ENCODE measurements at regions of chr3 and their contacts with region 1.

Region 1: DNA sequence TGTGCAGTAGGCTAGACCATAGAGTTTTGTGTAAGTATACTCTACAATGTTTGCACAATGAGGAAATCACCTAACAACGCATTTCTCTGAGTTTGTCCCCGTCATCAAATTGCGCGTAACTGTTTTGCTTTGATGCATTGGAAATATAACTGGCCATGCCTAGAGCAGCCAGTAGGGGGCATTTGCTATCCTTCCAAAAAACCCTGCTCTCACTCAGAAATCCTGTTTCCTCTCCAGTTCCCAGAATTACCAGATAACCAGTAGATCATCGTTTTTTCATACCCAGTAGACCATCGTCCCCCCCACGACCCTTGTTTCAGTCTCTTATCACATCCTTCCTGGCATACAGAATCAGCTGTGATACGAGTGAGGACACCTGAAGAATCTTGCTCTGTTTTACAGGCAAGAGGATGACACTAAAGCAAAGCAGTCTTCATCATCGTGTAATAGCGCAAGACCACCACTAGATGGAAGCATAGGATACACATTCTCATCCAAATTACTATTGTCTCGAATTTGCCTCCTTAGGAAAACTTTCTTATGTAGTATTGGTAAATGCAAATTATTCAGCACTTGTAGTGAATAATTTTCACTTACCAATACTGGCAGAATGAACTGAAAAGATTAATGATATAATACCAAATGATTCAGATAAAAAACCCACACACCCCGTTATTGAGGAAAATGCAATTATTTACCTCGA is 4.4 kb upstream of the GABRR3 start:
- DNase-seq: peak; percentile 36
- ATAC-seq: peak; percentile 99
- H3K4me3 Mint-ChIP-seq: peak overlapping the region; percentile 80
- H3K27ac Mint-ChIP-seq: peak overlapping the region; percentile 41
- H3K4me1 Mint-ChIP-seq: peaks cover 5% of the 10 kb centered on the region
- H3K27me3 Mint-ChIP-seq: peaks cover 5% of the 10 kb centered on the region
- CTCF ChIP-seq: peak; percentile 60

Region 2: DNA sequence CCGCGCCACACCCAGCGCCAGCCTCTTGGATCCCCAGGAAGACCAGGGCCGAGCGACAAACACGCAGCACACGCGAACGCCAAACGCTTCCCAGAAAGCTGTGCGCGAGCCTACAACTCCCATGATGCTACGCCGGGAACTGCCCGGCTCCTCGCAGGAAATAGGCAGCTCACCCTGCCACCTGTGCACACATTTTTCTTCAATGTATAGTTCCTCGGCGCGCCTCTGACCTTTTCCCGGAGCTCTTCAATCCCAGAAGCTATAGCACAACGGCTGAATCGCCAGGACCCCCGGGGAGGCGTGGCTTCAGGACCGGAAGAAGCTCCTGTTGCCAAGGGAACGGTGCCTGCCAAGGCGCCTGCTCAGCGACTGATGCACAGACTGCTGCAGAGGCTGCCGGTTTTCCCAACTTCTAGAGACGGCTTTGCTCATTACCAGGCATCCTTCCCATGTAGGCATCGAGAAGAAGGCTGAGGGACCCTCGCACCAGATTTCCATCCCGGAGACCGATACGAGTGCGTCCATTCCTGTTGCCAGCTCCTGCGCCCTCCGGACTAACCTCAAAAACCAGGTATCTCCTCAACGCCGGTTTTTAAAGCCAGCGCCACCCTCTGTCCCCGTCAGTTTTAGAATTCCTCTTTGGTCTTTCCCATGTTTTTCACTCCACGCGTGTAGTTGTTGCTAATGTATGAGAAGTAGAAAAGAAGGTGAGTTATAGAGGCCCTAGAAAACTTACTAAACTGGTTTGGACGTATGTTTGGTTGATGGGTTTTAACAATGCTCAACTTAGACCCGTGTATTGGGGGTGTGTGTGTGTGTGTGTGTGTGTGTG is 274.9 kb before region 1 on chr3 and contains the start of gene ARL6:
- CTCF ChIA-PET with region 1: interaction called, 4 read pairs
- POLR2A ChIA-PET with region 1: no interaction called
- intact Hi-C with region 1: loop called (anchors 1 kb)
- DNase-seq: peak; percentile 65
- ATAC-seq: peak; percentile 90
- H3K4me3 Mint-ChIP-seq: peak within 1 kb of the TSS; percentile 99
- H3K27ac Mint-ChIP-seq: peak within 1 kb of the TSS; percentile 95
- H3K4me1 Mint-ChIP-seq: peaks cover 23% of the 10 kb centered on the region
- H3K27me3 Mint-ChIP-seq: no peaks in the 10 kb centered on the region
- CTCF ChIP-seq: no peak
- total RNA-seq, gene ARL6: 2.5 and 4.2 TPM in 2 replicates

Region 3: DNA sequence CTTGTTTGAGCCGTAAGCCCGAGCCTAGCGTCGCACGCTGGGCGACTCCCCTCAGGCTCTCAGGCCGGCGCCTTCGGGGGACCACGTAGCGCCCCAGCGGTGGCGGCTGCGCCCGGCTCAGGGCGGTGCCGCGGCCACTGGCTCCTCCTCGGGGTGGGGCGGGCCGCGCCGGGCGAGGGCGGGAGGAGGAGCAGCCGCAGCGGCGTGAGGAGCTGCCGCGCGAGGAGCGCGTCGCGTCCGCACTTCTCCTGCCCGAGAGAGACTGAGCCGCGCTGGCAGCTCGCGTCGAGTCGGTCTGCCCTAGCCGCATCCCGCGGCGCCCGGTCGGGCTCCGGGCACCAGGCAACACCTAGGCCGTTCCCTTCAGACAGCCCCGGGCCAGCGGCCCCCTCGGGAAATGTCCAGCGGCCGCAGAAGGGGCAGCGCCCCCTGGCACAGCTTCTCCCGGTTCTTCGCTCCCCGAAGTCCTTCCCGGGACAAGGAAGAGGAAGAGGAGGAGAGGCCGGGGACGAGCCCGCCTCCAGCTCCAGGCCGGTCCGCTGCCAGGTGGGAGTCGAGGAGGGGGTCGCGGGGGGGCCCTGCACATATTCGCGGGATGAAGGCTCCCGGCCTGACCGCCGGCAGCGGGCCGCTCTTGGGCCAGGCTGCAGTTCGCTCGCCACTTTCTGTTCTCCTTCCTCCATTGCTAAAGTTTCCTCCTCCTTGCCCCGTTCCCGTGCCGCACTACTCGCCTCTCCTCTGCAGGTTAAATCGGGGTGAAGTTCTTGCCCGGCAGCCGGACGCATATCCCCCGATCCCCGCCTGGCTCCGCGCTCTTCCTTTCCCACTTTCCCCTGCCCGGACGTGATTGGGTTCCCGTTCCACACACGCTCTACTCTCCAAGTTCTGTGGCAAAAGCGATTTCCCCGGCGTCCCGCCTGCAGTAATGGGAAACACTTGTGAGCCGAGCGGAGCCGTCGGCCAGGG is 217.4 kb before region 1 on chr3 and contains the start of gene CRYBG3:
- CTCF ChIA-PET with region 1: no interaction called
- POLR2A ChIA-PET with region 1: no interaction called
- intact Hi-C with region 1: loop called (anchors 1 kb)
- DNase-seq: peak; percentile 80
- ATAC-seq: peak; percentile 99
- H3K4me3 Mint-ChIP-seq: peak within 1 kb of the TSS; percentile 88
- H3K27ac Mint-ChIP-seq: peak within 1 kb of the TSS; percentile 47
- H3K4me1 Mint-ChIP-seq: peaks cover 21% of the 10 kb centered on the region
- H3K27me3 Mint-ChIP-seq: peaks cover 44% of the 10 kb centered on the region
- CTCF ChIP-seq: no peak
- total RNA-seq, gene CRYBG3: 1.5 TPM in 2 replicates

Region 4: GRCh38 chr3:97882975-97883598 is 156.4 kb before region 1 on chr3:
- CTCF ChIA-PET with region 1: no interaction called
- POLR2A ChIA-PET with region 1: no interaction called
- intact Hi-C with region 1: no loop called
- DNase-seq: no peak
- ATAC-seq: no peak
- H3K4me3 Mint-ChIP-seq: no peak overlapping the region
- H3K27ac Mint-ChIP-seq: no peak overlapping the region
- H3K4me1 Mint-ChIP-seq: no peaks in the 10 kb centered on the region
- H3K27me3 Mint-ChIP-seq: no peaks in the 10 kb centered on the region
- CTCF ChIP-seq: no peak

Region 5: DNA sequence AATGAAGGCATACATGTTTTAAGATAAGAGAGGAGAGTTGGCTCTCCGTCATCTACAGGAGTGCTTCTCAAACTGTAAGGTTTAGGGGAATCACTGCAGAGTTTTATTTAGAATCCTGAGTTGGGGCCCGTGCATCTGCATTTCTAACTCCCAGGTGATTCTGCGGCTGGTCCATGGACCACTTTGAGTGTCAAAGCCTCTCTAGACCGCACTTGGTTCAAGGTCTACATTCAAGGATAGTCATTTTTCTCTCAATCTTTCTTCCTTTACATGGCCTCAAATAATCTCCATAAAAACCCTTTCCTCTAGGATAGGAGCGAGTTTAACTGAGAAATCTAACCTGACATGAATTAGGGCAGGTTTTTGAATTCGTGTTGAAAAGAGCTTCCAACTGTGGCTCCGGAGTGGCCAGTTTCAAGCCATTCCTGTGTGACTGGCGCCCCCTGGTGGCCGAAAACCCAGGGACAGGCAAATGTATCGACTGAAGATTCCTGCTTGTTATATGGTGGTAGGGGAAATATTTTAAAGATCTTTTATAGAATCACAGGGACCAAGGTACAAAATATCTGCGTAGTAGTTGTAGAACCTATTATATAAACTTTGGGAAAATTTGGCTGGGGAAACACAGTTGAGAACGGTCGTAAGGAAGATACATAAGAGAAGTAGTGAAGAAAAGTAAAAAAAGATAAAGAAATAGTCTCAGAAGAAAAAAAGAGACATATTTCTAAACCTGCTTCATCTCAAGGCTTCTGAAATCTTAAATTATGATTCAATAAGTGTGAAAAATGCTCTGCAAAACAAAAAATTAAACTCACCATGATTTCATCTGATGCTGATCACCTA is 16.3 kb before region 1 on chr3:
- CTCF ChIA-PET with region 1: interaction called, 14 read pairs
- POLR2A ChIA-PET with region 1: no interaction called
- intact Hi-C with region 1: no loop called
- DNase-seq: peak; percentile 79
- ATAC-seq: peak; percentile 66
- H3K4me3 Mint-ChIP-seq: no peak overlapping the region
- H3K27ac Mint-ChIP-seq: no peak overlapping the region
- H3K4me1 Mint-ChIP-seq: no peaks in the 10 kb centered on the region
- H3K27me3 Mint-ChIP-seq: peaks cover 5% of the 10 kb centered on the region
- CTCF ChIP-seq: peak; percentile 85

Region 6: GRCh38 chr3:98329392-98330124 is 290.1 kb after region 1 on chr3:
- CTCF ChIA-PET with region 1: no interaction called
- POLR2A ChIA-PET with region 1: no interaction called
- intact Hi-C with region 1: loop called (anchors 1 kb)
- DNase-seq: no peak
- ATAC-seq: no peak
- H3K4me3 Mint-ChIP-seq: no peak overlapping the region
- H3K27ac Mint-ChIP-seq: no peak overlapping the region
- H3K4me1 Mint-ChIP-seq: no peaks in the 10 kb centered on the region
- H3K27me3 Mint-ChIP-seq: peaks cover 6% of the 10 kb centered on the region
- CTCF ChIP-seq: no peak

Region 7: DNA sequence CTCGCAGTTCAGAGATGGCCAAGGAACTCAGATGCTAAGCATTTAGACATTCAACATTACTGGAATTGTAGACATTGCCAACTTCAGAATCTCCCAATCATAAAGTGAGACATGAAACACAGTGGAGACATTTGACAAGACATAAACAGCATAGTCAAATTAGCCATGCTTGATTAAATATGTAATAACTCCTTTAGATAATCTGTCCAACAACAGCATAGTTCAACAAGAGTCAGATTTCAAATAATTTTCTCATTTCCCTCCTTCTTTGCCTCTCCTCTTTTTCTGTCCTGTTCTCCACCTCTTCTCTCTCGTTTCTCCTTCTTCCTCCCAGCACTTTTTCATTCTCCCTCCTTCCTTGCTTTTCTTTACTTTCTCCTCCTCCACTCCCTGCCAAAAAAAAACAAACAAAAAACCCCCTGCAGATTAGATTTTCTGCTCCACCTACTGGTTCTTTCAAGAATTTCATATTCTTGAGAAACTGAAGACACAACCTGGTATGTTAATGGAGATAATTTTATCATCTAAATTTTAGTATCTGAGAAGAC is 533.8 kb after region 1 on chr3:
- CTCF ChIA-PET with region 1: interaction called, 3 read pairs
- POLR2A ChIA-PET with region 1: no interaction called
- intact Hi-C with region 1: loop called (anchors 1 kb)
- DNase-seq: no peak
- ATAC-seq: peak; percentile 40
- H3K4me3 Mint-ChIP-seq: peak overlapping the region; percentile 21
- H3K27ac Mint-ChIP-seq: peak overlapping the region; percentile 74
- H3K4me1 Mint-ChIP-seq: peaks cover 6% of the 10 kb centered on the region
- H3K27me3 Mint-ChIP-seq: no peaks in the 10 kb centered on the region
- CTCF ChIP-seq: no peak

Region 8: GRCh38 chr3:98657457-98657856 is 618.0 kb after region 1 on chr3:
- CTCF ChIA-PET with region 1: no interaction called
- POLR2A ChIA-PET with region 1: no interaction called
- intact Hi-C with region 1: loop called (anchors 5 kb)
- DNase-seq: no peak
- ATAC-seq: no peak
- H3K4me3 Mint-ChIP-seq: no peak overlapping the region
- H3K27ac Mint-ChIP-seq: no peak overlapping the region
- H3K4me1 Mint-ChIP-seq: peaks cover 3% of the 10 kb centered on the region
- H3K27me3 Mint-ChIP-seq: peaks cover 13% of the 10 kb centered on the region
- CTCF ChIP-seq: no peak

Region 9: GRCh38 chr3:98830004-98830403 is 790.5 kb after region 1 on chr3:
- CTCF ChIA-PET with region 1: no interaction called
- POLR2A ChIA-PET with region 1: no interaction called
- intact Hi-C with region 1: no loop called
- DNase-seq: no peak
- ATAC-seq: no peak
- H3K4me3 Mint-ChIP-seq: no peak overlapping the region
- H3K27ac Mint-ChIP-seq: no peak overlapping the region
- H3K4me1 Mint-ChIP-seq: no peaks in the 10 kb centered on the region
- H3K27me3 Mint-ChIP-seq: no peaks in the 10 kb centered on the region
- CTCF ChIP-seq: no peak